ENCODE measurements at regions of chr2 and their contacts with region 1.

Region 1: GRCh38 chr2:86079981-86080911 is 25.4 kb downstream of the POLR1A start:
- DNase-seq: peak; percentile 71 to 89 (median 79)
- H3K4me3 ChIP-seq: no peak overlapping the region
- H3K4me3 Mint-ChIP-seq: peak overlapping the region; percentile 21 to 82 (median 69)
- H3K27ac ChIP-seq: peak overlapping the region; percentile 64
- H3K27ac Mint-ChIP-seq: peak overlapping the region; percentile 96 to 99 (median 97)
- H3K4me1 ChIP-seq: peaks cover 22% of the 10 kb centered on the region
- H3K4me1 Mint-ChIP-seq: peaks cover 29 to 35% (median 32%) of the 10 kb centered on the region in 3 donors
- H3K27me3 ChIP-seq: no peaks in the 10 kb centered on the region
- H3K27me3 Mint-ChIP-seq: peaks cover 0 to 6% of the 10 kb centered on the region in 2 donors

Region 2: GRCh38 chr2:85988175-85988913 is 91.9 kb before region 1 on chr2:
- CTCF ChIA-PET with region 1: no interaction called
- POLR2A ChIA-PET with region 1: no interaction called
- DNase-seq: no peak
- H3K4me3 ChIP-seq: no peak overlapping the region
- H3K4me3 Mint-ChIP-seq: no peak overlapping the region
- H3K27ac ChIP-seq: no peak overlapping the region
- H3K27ac Mint-ChIP-seq: peak overlapping the region in 2 of 8 donors; percentile 5 to 48
- H3K4me1 ChIP-seq: no peaks in the 10 kb centered on the region
- H3K4me1 Mint-ChIP-seq: peaks cover 0 to 4% (median 2%) of the 10 kb centered on the region in 3 donors
- H3K27me3 ChIP-seq: no peaks in the 10 kb centered on the region
- H3K27me3 Mint-ChIP-seq: no peaks in the 10 kb centered on the region

Region 3: GRCh38 chr2:86042256-86043168 is 37.7 kb before region 1 on chr2:
- CTCF ChIA-PET with region 1: interaction called, 58 read pairs
- POLR2A ChIA-PET with region 1: interaction called, 18 read pairs
- DNase-seq: no peak
- H3K4me3 ChIP-seq: no peak overlapping the region
- H3K4me3 Mint-ChIP-seq: peak overlapping the region in 1 of 7 donors; percentile 63
- H3K27ac ChIP-seq: no peak overlapping the region
- H3K27ac Mint-ChIP-seq: peak overlapping the region; percentile 83 to 100 (median 99)
- H3K4me1 ChIP-seq: peaks cover 45% of the 10 kb centered on the region
- H3K4me1 Mint-ChIP-seq: peaks cover 46 to 55% (median 52%) of the 10 kb centered on the region in 3 donors
- H3K27me3 ChIP-seq: no peaks in the 10 kb centered on the region
- H3K27me3 Mint-ChIP-seq: peaks cover 0 to 9% of the 10 kb centered on the region in 2 donors

Region 4: GRCh38 chr2:86147793-86148192 is 67.5 kb after region 1 on chr2:
- CTCF ChIA-PET with region 1: no interaction called
- POLR2A ChIA-PET with region 1: no interaction called
- DNase-seq: no peak
- H3K4me3 ChIP-seq: no peak overlapping the region
- H3K4me3 Mint-ChIP-seq: no peak overlapping the region
- H3K27ac ChIP-seq: no peak overlapping the region
- H3K27ac Mint-ChIP-seq: peak overlapping the region in 5 of 8 donors; percentile 7 to 68 (median 29)
- H3K4me1 ChIP-seq: no peaks in the 10 kb centered on the region
- H3K4me1 Mint-ChIP-seq: peaks cover 0 to 3% (median 2%) of the 10 kb centered on the region in 3 donors
- H3K27me3 ChIP-seq: no peaks in the 10 kb centered on the region
- H3K27me3 Mint-ChIP-seq: no peaks in the 10 kb centered on the region

Measured in CD8-positive, alpha-beta memory T cell (primary cell).